Kidney (tissue), 22 donors: ENCODE measurements at regions of chr3 and their contacts with region 1.

Region 1: GRCh38 chr3:72821161-72821781 is 27.0 kb downstream of the SHQ1 start:
- DNase-seq: peak in 1 of 5 donors; percentile 65
- H3K4me3 ChIP-seq: peak overlapping the region in 1 of 3 donors; percentile 10
- H3K27ac ChIP-seq: peak overlapping the region in 1 of 2 donors; percentile 26
- H3K4me1 ChIP-seq: peaks cover 10 to 21% (median 16%) of the 10 kb centered on the region in 3 donors
- H3K27me3 ChIP-seq: no peaks in the 10 kb centered on the region
- CTCF ChIP-seq: no peak

Region 2: GRCh38 chr3:71951361-71951760 is 869.9 kb before region 1 on chr3:
- intact Hi-C with region 1: loop called (anchors 5 kb)
- DNase-seq: no peak
- H3K4me3 ChIP-seq: no peak overlapping the region
- H3K27ac ChIP-seq: no peak overlapping the region
- H3K4me1 ChIP-seq: peaks cover 0 to 3% (median 0%) of the 10 kb centered on the region in 3 donors
- H3K27me3 ChIP-seq: no peaks in the 10 kb centered on the region
- CTCF ChIP-seq: no peak